ENCODE measurements at regions of chr13 and their contacts with region 1.

Region 1: GRCh38 chr13:27826379-27827353 is 34.4 kb downstream of the GSX1 start:
- DNase-seq: peak; percentile 53 to 66
- H3K4me3 ChIP-seq: peak overlapping the region; percentile 41; the same call in 1 of the 2 replicates
- H3K27ac ChIP-seq: no peak overlapping the region
- H3K4me1 ChIP-seq: 0 out of 2 replicates have a peak, but pooled peaks cover 3% of the 10 kb centered on the region
- H3K27me3 ChIP-seq: peaks cover 40% of the 10 kb centered on the region
- CTCF ChIP-seq: peak; percentile 97

Region 2: DNA sequence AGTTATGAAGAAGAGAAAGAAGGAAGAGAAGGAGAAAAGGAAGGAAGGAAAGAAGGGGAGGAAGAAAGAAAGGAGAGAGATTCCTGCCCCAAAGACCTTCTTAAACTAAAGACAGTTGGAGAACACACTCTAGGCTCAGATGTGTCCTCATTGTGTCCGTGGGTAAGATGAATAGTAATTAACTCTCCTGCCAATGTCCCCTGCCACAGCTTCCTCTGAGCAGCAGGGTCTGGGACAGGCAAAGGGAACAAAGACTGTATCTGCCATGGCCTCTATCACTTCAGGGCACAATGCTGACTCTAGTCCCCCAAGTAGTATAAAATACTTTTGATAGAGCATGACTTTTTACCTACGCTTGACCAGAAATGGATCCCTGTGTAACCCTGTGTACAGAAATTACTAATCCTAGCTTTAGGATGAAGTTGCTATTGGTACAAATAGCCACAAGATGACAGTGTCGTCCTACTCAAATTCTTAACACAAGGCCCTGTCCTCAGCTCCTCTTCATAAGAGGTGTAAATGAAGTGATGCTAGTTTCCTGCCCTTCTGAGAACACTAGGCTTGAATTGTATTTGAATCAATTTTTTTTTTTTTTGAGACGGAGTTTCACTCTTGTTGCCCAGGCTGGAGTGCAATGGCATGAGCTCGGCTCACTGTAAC is 879.9 kb before region 1 on chr13:
- CTCF ChIA-PET with region 1: interaction called, 15 read pairs
- POLR2A ChIA-PET with region 1: no interaction called
- intact Hi-C with region 1: no loop called
- DNase-seq: peak in 1 of 2 experiments; percentile 57
- H3K4me3 ChIP-seq: no peak overlapping the region
- H3K27ac ChIP-seq: no peak overlapping the region
- H3K4me1 ChIP-seq: 0 out of 2 replicates have a peak, but pooled peaks cover 6% of the 10 kb centered on the region
- H3K27me3 ChIP-seq: 0 out of 2 replicates have a peak, but pooled peaks cover under 1% of the 10 kb centered on the region
- CTCF ChIP-seq: peak; percentile 86

Region 3: GRCh38 chr13:27374650-27375049 is 452.0 kb before region 1 on chr13:
- CTCF ChIA-PET with region 1: interaction called, 6 read pairs
- POLR2A ChIA-PET with region 1: no interaction called
- intact Hi-C with region 1: loop called (anchors 1 kb)
- DNase-seq: peak; percentile 34 to 58
- H3K4me3 ChIP-seq: no peak overlapping the region
- H3K27ac ChIP-seq: no peak overlapping the region
- H3K4me1 ChIP-seq: no peaks in the 10 kb centered on the region
- H3K27me3 ChIP-seq: peaks cover 44% of the 10 kb centered on the region
- CTCF ChIP-seq: peak; percentile 73

Region 4: DNA sequence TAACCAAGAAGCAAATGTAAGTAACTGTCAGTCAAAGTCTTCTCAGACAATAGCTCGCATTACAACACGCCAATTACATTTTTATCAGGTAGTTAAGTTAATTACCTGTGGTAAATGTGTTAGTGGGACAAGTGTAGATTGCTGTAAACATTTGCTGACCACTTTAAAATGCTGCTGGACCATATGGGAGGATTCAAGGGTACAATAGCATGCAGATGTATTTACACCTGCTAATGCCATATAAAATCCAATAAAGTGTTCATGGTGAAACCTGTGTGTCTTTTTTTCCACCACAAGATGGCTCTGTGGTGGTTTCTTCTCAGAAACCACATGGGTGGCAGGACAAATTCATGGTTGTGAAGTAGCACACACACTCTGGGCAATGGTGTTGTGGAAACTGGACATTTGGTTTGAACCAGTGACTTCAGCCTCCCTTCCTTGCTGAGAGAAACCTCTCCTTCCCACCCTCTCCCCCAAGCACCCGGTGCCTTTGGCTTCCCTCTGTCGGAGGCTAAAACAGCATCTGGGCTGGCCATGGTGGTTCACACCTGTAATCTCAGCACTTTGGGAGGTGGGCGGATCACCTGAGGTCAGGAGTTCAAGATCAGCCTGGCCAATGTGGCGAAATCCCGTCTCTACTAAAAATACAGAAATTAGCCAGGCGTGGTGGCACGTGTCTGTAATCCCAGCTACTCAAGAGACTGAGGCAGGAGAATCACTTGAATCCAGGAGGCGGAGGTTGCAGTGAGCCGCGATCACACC is 420.3 kb before region 1 on chr13:
- CTCF ChIA-PET with region 1: interaction called, 4 read pairs
- POLR2A ChIA-PET with region 1: no interaction called
- intact Hi-C with region 1: loop called (anchors 1 kb)
- DNase-seq: peak in 1 of 2 experiments; percentile 45
- H3K4me3 ChIP-seq: no peak overlapping the region
- H3K27ac ChIP-seq: no peak overlapping the region
- H3K4me1 ChIP-seq: no peaks in the 10 kb centered on the region
- H3K27me3 ChIP-seq: peaks cover 47% of the 10 kb centered on the region
- CTCF ChIP-seq: peak; percentile 68

Region 5: DNA sequence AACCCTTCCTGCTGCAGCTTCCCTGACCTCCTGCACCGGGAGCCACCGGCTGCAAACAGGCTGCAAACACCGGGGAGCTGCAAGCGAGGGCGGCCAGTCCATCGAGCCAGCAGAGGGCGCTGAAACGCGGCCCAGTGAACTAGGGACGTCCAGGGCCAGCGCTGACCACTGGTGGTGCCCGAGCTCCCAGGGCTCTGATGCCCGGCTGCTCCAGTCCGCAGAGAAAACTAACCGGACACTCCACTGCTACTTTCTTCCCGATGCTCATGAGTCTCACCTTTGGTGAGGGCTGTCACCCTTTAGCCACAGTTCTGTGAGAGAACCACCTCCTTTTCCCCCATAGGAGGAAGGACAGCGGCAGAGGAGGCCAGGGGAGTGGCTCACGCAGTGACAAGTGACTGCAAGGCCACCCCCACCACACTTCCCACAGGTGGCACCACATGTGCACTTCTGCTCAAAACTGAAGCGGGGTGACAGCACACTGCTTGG is 293.5 kb before region 1 on chr13:
- CTCF ChIA-PET with region 1: interaction called, 3 read pairs
- POLR2A ChIA-PET with region 1: interaction called, 8 read pairs
- intact Hi-C with region 1: loop called (anchors 1 kb)
- DNase-seq: peak; percentile 48 to 81
- H3K4me3 ChIP-seq: peak overlapping the region; percentile 44; the same call in 1 of the 2 replicates
- H3K27ac ChIP-seq: no peak overlapping the region
- H3K4me1 ChIP-seq: no peaks in the 10 kb centered on the region
- H3K27me3 ChIP-seq: no peaks in the 10 kb centered on the region
- CTCF ChIP-seq: peak; percentile 87

Region 6: DNA sequence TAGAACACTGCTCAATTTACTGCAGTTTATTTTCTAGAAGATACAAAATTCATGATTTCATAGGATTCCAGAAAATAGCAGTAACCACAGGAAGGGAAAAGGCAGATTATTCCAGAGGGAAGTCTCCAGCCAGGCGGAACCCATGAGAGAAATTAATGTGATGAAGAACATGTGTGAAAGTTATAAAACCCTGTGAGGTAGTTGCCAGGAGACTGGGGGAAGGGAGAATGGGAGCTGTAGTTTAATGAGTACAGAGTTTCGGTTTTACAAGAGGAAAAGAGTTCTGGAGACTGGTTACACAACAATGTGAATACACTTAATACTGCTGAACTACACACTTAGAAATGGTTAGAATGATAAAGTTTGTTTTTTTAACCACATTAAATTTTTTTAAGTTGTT is 79.0 kb after region 1 on chr13:
- CTCF ChIA-PET with region 1: no interaction called
- POLR2A ChIA-PET with region 1: no interaction called
- intact Hi-C with region 1: no loop called
- DNase-seq: no peak
- H3K4me3 ChIP-seq: no peak overlapping the region
- H3K27ac ChIP-seq: no peak overlapping the region
- H3K4me1 ChIP-seq: no peaks in the 10 kb centered on the region
- H3K27me3 ChIP-seq: peaks cover 35% of the 10 kb centered on the region
- CTCF ChIP-seq: no peak

Region 7: GRCh38 chr13:27980280-27980998 is 153.8 kb after region 1 on chr13:
- CTCF ChIA-PET with region 1: interaction called, 6 read pairs
- POLR2A ChIA-PET with region 1: no interaction called
- intact Hi-C with region 1: loop called (anchors 1 kb)
- DNase-seq: no peak
- H3K4me3 ChIP-seq: no peak overlapping the region
- H3K27ac ChIP-seq: no peak overlapping the region
- H3K4me1 ChIP-seq: no peaks in the 10 kb centered on the region
- H3K27me3 ChIP-seq: peaks cover 40% of the 10 kb centered on the region
- CTCF ChIP-seq: no peak

Measured in PC-9 (cell line).